ENCODE measurements at regions of chrX and their contacts with region 1.

Region 1: GRCh38 chrX:107710617-107711391 is 64.8 kb downstream of the TSC22D3 start:
- DNase-seq: no peak
- ATAC-seq: peak; percentile 73

Region 2: DNA sequence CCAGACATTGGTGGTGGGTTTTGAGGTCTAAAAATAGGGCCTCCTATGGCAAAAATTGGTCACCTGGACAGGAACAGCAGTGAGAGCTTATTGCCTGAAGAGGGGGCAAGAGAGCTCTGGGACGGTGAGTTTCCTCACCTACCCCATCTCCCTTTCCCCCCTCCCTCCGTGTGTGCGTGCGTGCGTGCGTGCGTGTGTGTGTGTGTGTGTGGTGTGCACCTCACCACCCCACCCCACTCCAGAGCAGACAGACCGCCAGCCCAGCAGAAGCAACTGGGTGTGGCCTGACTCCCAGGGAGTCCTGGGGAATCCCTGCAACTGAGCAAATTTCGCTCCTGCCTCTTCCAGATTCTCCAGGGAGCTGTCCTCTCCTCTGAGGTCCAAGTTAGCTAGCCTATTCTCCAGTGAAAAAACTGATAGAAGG is 37.8 kb before region 1 on chrX:
- intact Hi-C with region 1: loop called (anchors 5 kb)
- DNase-seq: peak; percentile 80
- ATAC-seq: peak; percentile 44